Psoas muscle (tissue), 8 donors: ENCODE measurements at regions of chr11 and their contacts with region 1.

Region 1: DNA sequence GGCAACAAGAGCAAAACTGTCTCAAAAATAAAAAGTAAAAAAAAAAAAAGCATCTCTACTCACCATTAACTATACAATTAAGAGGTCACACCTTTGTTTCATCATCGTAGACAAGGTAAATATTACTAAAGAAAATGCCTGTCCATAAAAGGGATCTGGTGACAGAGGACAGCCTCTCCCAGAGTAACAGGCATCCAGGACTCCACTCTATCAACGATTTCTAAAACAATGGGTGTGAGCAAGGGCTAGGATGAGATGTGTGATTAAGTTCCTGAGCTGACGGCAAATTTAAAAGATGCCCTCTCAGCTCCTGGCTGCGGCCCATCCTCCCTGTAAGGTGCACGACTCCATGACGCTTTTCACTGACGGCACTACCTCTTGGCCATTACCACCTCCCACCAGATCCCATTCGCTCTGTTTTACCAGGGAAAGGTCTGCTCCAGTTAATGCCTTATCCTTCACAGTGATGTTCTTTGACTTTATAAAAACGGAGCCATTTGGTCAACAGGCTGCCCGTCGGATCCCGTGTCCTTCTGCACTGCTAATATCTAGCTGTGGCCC is 2.3 kb upstream of the TMEM45B start:
- DNase-seq: no peak
- ATAC-seq: no peak
- H3K4me3 ChIP-seq: no peak overlapping the region
- H3K27ac ChIP-seq: no peak overlapping the region
- H3K4me1 ChIP-seq: no peaks in the 10 kb centered on the region
- H3K27me3 ChIP-seq: peaks cover 0 to 20% (median 14%) of the 10 kb centered on the region in 3 donors
- CTCF ChIP-seq: no peak

Region 2: GRCh38 chr11:129681344-129682114 is 131.8 kb before region 1 on chr11:
- intact Hi-C with region 1: no loop called
- DNase-seq: no peak
- ATAC-seq: no peak
- H3K4me3 ChIP-seq: no peak overlapping the region
- H3K27ac ChIP-seq: no peak overlapping the region
- H3K4me1 ChIP-seq: no peaks in the 10 kb centered on the region
- H3K27me3 ChIP-seq: no peaks in the 10 kb centered on the region
- CTCF ChIP-seq: no peak

Region 3: GRCh38 chr11:129853518-129854236 is 40.4 kb after region 1 on chr11:
- intact Hi-C with region 1: loop called in 1 of 2 experiments (anchors 1 kb)
- DNase-seq: peak in 1 of 2 donors; percentile 27
- ATAC-seq: peak in 1 of 4 donors; percentile 41
- H3K4me3 ChIP-seq: no peak overlapping the region
- H3K27ac ChIP-seq: peak overlapping the region; percentile 4
- H3K4me1 ChIP-seq: no peaks in the 10 kb centered on the region
- H3K27me3 ChIP-seq: no peaks in the 10 kb centered on the region
- CTCF ChIP-seq: no peak